ENCODE measurements at regions of chr5 and their contacts with region 1.

Region 1: DNA sequence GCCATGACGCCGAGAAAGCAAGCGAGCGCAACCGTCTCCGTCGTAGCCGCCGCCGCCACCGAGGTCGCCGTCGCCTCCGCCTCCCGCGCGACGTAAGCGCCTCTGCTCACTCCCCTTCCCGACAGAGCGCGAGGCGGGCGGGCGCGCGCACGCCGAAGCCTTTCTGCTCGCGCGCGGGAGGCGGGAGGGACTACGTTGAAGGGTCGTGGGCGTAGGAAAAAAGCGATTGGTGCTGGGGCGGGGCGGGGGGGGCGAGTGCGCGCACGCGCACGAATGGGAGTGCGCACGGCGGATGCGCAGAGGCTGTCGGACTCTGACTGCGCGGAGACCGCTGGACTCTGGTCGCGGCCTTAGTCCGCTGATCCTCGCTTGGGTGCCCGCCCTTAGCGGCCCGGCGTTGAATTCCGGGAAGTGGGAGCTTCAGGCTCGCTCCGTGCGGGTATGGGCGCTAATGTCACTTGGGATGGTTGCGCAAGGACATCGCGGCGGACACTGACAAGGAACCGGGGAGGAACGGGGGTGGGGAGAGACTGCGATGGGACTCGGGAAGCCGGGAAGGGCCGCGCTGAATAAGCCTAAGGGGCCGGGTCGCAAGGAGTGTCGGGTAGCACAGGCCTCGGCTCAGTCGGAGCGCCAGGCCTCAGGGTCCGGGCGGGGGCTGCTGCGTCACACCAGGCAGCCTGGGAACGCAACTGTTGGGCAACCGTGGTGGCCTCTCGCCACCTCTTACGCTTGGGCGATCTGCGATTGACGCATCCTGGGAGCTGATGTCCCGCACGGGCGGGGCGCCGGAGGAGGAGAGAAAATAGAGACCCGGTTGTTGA is at the start of gene CHD1:
- DNase-seq: peak; percentile 89 to 99 (median 94)
- ATAC-seq: peak; percentile 50
- H3K4me3 ChIP-seq: peak within 1 kb of the TSS; percentile 97
- H3K4me3 Mint-ChIP-seq: peak within 1 kb of the TSS; percentile 99
- H3K27ac ChIP-seq: peak within 1 kb of the TSS; percentile 100
- H3K27ac Mint-ChIP-seq: peak within 1 kb of the TSS; percentile 97
- H3K4me1 ChIP-seq: peaks cover 23% of the 10 kb centered on the region
- H3K4me1 Mint-ChIP-seq: peaks cover 68% of the 10 kb centered on the region
- H3K27me3 ChIP-seq: no peaks in the 10 kb centered on the region
- H3K27me3 Mint-ChIP-seq: no peaks in the 10 kb centered on the region
- CTCF ChIP-seq: no peak
- total RNA-seq, gene CHD1: 217 to 228 TPM

Region 2: GRCh38 chr5:98773464-98774191 is 155.5 kb before region 1 on chr5 and contains the start of gene RGMB:
- CTCF ChIA-PET with region 1: no interaction called
- POLR2A ChIA-PET with region 1: interaction called, 17 read pairs
- intact Hi-C with region 1: loop called (anchors 5 kb)
- DNase-seq: peak; percentile 79 to 94 (median 88)
- ATAC-seq: peak; percentile 85
- H3K4me3 ChIP-seq: peak within 1 kb of the TSS; percentile 74
- H3K4me3 Mint-ChIP-seq: peak within 1 kb of the TSS; percentile 99
- H3K27ac ChIP-seq: peak within 1 kb of the TSS; percentile 10 to 61
- H3K27ac Mint-ChIP-seq: peak within 1 kb of the TSS; percentile 87
- H3K4me1 ChIP-seq: peaks cover 45% of the 10 kb centered on the region
- H3K4me1 Mint-ChIP-seq: peaks cover 72% of the 10 kb centered on the region
- H3K27me3 ChIP-seq: peaks cover 0 to 12% of the 10 kb centered on the region in 2 experiments
- H3K27me3 Mint-ChIP-seq: peaks cover 14% of the 10 kb centered on the region
- CTCF ChIP-seq: no peak
- total RNA-seq, gene RGMB: 15.8 to 15.9 TPM

Region 3: DNA sequence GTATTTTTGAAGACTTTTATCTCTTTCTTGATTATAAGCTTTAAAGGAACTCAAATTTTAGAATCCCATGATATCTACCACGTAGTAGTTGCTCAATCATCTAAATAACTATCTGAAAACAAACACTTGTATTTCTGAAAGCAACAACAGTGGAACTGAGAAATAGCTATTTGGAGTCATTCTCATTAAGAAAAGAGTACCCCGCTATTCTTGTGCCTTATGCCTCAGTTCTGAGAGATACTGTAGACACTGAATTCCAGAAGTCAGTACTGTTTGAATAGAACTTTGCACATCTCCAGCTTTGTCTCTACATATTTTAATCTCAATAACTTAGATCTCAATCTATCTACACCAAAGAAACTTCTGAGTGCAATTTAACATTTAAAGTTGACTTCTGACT is 11.7 kb before region 1 on chr5:
- CTCF ChIA-PET with region 1: interaction called, 3 read pairs
- POLR2A ChIA-PET with region 1: interaction called, 25 read pairs
- intact Hi-C with region 1: no loop called
- DNase-seq: no peak
- ATAC-seq: no peak
- H3K4me3 ChIP-seq: no peak overlapping the region
- H3K4me3 Mint-ChIP-seq: peak overlapping the region; percentile 32
- H3K27ac ChIP-seq: no peak overlapping the region
- H3K27ac Mint-ChIP-seq: peak overlapping the region; percentile 19
- H3K4me1 ChIP-seq: peaks cover 23% of the 10 kb centered on the region
- H3K4me1 Mint-ChIP-seq: peaks cover 86% of the 10 kb centered on the region
- H3K27me3 ChIP-seq: no peaks in the 10 kb centered on the region
- H3K27me3 Mint-ChIP-seq: no peaks in the 10 kb centered on the region
- CTCF ChIP-seq: no peak

Region 4: DNA sequence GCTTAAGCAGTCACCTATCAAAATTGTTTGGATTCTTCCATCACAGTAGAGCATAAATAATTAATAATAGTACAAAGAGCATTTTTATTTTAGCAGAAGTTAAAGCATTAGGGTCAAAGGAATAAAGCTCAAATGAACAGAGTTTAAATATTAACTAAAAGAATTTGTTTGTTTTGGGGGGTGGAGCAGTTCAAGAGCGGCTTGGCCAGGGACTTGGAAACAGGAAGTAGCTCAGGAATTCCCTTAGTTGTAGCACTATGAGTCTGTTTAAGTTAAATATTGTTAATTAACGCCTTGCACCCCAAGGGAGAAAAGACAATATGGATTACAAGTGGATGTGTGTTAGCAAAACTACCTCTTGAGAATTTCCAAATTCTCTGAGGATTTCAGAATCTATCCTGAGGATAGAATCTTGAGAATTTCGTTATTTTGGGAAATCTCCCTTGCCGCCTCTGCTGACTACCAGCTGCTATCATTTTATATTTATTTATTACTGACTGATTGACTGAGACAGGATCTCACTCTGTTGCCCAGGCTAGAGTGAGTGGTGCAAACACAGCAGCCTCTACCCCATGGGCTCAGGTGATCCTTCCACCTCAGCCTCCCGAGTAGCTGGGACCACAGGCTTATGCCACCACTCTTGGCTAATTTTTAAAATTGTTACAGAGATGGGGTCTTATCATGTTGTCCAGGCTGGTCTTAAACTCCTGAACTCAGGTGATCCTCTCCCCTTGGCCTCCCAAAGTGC is 96.4 kb after region 1 on chr5:
- CTCF ChIA-PET with region 1: no interaction called
- POLR2A ChIA-PET with region 1: interaction called, 40 read pairs
- intact Hi-C with region 1: loop called in 1 of 2 experiments (anchors 5 kb)
- DNase-seq: no peak
- ATAC-seq: no peak
- H3K4me3 ChIP-seq: no peak overlapping the region
- H3K4me3 Mint-ChIP-seq: no peak overlapping the region
- H3K27ac ChIP-seq: no peak overlapping the region
- H3K27ac Mint-ChIP-seq: no peak overlapping the region
- H3K4me1 ChIP-seq: peaks cover 16% of the 10 kb centered on the region
- H3K4me1 Mint-ChIP-seq: peaks cover 30% of the 10 kb centered on the region
- H3K27me3 ChIP-seq: no peaks in the 10 kb centered on the region
- H3K27me3 Mint-ChIP-seq: no peaks in the 10 kb centered on the region
- CTCF ChIP-seq: no peak

Region 5: GRCh38 chr5:99054972-99055371 is 125.9 kb after region 1 on chr5:
- CTCF ChIA-PET with region 1: no interaction called
- POLR2A ChIA-PET with region 1: interaction called, 57 read pairs
- intact Hi-C with region 1: no loop called
- DNase-seq: peak in 1 of 14 experiments; percentile 35
- ATAC-seq: peak; percentile 46
- H3K4me3 ChIP-seq: no peak overlapping the region
- H3K4me3 Mint-ChIP-seq: no peak overlapping the region
- H3K27ac ChIP-seq: no peak overlapping the region
- H3K27ac Mint-ChIP-seq: peak overlapping the region; percentile 68
- H3K4me1 ChIP-seq: peaks cover 4% of the 10 kb centered on the region
- H3K4me1 Mint-ChIP-seq: peaks cover 24% of the 10 kb centered on the region
- H3K27me3 ChIP-seq: no peaks in the 10 kb centered on the region
- H3K27me3 Mint-ChIP-seq: peaks cover 5% of the 10 kb centered on the region
- CTCF ChIP-seq: no peak

Region 6: GRCh38 chr5:100535060-100536005 is 1606.2 kb after region 1 on chr5 and contains the start of gene FAM174A:
- CTCF ChIA-PET with region 1: no interaction called
- POLR2A ChIA-PET with region 1: interaction called, 4 read pairs
- intact Hi-C with region 1: loop called in 1 of 2 experiments (anchors 10 kb)
- DNase-seq: peak; percentile 90 to 98 (median 92)
- ATAC-seq: peak; percentile 86
- H3K4me3 ChIP-seq: peak within 1 kb of the TSS; percentile 83
- H3K4me3 Mint-ChIP-seq: peak within 1 kb of the TSS; percentile 92
- H3K27ac ChIP-seq: peak within 1 kb of the TSS; percentile 62 to 89
- H3K27ac Mint-ChIP-seq: peak within 1 kb of the TSS; percentile 89
- H3K4me1 ChIP-seq: peaks cover 13% of the 10 kb centered on the region
- H3K4me1 Mint-ChIP-seq: peaks cover 35% of the 10 kb centered on the region
- H3K27me3 ChIP-seq: no peaks in the 10 kb centered on the region
- H3K27me3 Mint-ChIP-seq: no peaks in the 10 kb centered on the region
- CTCF ChIP-seq: no peak
- total RNA-seq, gene FAM174A: 5.4 to 6.2 TPM